ENCODE measurements at regions of chr2 and their contacts with region 1.

Region 1: GRCh38 chr2:66434679-66435548 is at the start of gene MEIS1:
- DNase-seq: peak; percentile 100
- ATAC-seq: peak; percentile 50
- H3K4me3 ChIP-seq: peak within 1 kb of the TSS; percentile 99
- H3K27ac ChIP-seq: peak within 1 kb of the TSS; percentile 99
- H3K4me1 ChIP-seq: peaks cover 5% of the 10 kb centered on the region; the same call in 1 of the 2 replicates
- H3K27me3 ChIP-seq: no peaks in the 10 kb centered on the region
- CTCF ChIP-seq: no peak
- POLR2A ChIP-seq: peak; percentile 99
- RAD21 ChIP-seq: peak; percentile 10
- total RNA-seq, gene MEIS1: 157 and 209 TPM in 2 replicates

Region 2: GRCh38 chr2:66839551-66840320 is 404.8 kb after region 1 on chr2:
- CTCF ChIA-PET with region 1: no interaction called
- POLR2A ChIA-PET with region 1: interaction called, 5 read pairs
- dilution Hi-C with region 1: no loop called
- in situ Hi-C with region 1: loop called (anchors 10 kb)
- intact Hi-C with region 1: no loop called
- DNase-seq: peak; percentile 100
- ATAC-seq: peak; percentile 93
- H3K4me3 ChIP-seq: 0 out of 2 replicates have a peak overlapping the region, but pooled peaks have one; percentile 37
- H3K27ac ChIP-seq: peak overlapping the region; percentile 89
- H3K4me1 ChIP-seq: peaks cover 11% of the 10 kb centered on the region
- H3K27me3 ChIP-seq: no peaks in the 10 kb centered on the region
- CTCF ChIP-seq: 0 out of 2 replicates have a peak, but pooled peaks have one; percentile 1
- POLR2A ChIP-seq: peak; percentile 73
- RAD21 ChIP-seq: no peak; the same call in 1 of the 2 replicates

Region 3: DNA sequence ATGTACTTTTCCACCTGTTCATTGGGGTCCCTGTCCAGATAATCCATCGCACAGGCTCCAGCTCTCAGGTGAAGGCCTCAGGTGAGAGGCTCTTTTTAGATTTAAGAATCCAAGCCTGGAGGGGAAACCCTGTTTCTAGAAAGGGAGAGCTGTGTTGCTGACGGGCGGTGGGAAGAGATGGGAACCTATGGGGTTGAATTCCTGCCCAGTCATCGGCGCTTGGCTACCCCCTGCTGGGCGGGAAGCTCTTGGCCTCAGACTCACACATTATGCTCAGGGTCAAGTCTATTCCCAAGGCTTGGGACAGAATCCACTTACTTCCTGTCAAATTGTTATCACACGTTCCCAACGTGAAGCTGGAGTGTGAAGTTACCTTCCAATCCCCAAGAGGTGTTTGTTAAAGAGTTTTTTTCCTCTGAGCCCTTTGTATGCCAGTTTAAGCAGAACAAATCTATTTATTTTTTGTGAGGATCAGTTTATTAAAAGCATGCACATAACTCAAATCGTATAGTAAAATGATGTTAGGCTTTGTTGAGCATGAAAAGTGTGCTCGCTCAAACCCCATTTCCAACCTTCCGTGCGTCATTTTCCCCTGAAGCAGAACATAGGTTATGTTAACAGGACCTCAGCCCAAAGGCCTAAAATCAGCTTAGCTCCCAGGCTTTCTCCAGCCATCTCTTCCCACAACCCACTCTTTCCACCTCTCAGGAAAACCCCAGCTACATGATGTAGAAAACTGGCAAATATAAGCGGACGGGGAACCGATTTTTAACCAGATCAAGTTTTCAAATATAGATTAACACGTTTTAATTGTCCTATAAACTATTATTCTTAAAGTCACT is 780.5 kb after region 1 on chr2:
- CTCF ChIA-PET with region 1: no interaction called
- POLR2A ChIA-PET with region 1: no interaction called
- dilution Hi-C with region 1: loop called (anchors 25 kb)
- in situ Hi-C with region 1: no loop called
- intact Hi-C with region 1: loop called (anchors 1 kb)
- DNase-seq: peak; percentile 92
- ATAC-seq: peak; percentile 95
- H3K4me3 ChIP-seq: no peak overlapping the region
- H3K27ac ChIP-seq: peak overlapping the region; percentile 86
- H3K4me1 ChIP-seq: peaks cover 16% of the 10 kb centered on the region
- H3K27me3 ChIP-seq: no peaks in the 10 kb centered on the region
- CTCF ChIP-seq: peak; percentile 88
- POLR2A ChIP-seq: no peak
- RAD21 ChIP-seq: peak; percentile 95

Region 4: DNA sequence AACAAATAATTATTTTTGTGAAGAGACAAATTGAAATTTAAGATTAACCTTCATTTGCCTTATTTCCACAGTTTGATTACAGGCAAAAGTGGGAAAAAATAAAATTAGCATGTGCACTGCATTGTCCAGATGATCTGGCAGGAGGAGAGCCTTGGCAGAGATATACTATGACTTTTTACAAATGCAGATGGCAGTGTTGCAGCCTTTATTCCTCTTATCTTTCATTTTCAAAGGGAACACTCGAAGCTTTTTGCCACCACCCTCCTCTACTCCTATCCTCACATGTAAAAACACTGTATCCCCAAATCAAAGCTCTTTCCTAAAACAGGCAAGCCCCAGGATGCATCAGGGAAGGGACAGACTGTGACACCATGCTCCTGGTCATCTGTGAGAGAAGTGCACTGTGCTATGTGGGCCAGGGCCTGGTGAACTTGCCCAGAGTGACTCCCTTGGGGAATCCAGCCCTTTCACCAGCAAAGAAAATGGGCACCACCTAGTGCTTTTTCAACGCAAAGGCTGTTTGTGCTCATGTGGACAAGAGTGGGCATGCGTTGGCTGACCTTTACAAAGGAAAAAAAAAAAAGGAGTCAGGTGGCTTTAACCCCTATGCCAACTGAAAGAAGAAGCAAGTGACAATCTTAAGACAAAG is 887.6 kb after region 1 on chr2:
- CTCF ChIA-PET with region 1: interaction called, 3 read pairs
- POLR2A ChIA-PET with region 1: no interaction called
- dilution Hi-C with region 1: no loop called
- in situ Hi-C with region 1: no loop called
- intact Hi-C with region 1: loop called (anchors 5 kb)
- DNase-seq: peak; percentile 76
- ATAC-seq: peak; percentile 87
- H3K4me3 ChIP-seq: no peak overlapping the region
- H3K27ac ChIP-seq: peak overlapping the region; percentile 47; the same call in 1 of the 2 replicates
- H3K4me1 ChIP-seq: peaks cover 5% of the 10 kb centered on the region
- H3K27me3 ChIP-seq: no peaks in the 10 kb centered on the region
- CTCF ChIP-seq: peak; percentile 57
- POLR2A ChIP-seq: no peak
- RAD21 ChIP-seq: peak; percentile 76

Region 5: DNA sequence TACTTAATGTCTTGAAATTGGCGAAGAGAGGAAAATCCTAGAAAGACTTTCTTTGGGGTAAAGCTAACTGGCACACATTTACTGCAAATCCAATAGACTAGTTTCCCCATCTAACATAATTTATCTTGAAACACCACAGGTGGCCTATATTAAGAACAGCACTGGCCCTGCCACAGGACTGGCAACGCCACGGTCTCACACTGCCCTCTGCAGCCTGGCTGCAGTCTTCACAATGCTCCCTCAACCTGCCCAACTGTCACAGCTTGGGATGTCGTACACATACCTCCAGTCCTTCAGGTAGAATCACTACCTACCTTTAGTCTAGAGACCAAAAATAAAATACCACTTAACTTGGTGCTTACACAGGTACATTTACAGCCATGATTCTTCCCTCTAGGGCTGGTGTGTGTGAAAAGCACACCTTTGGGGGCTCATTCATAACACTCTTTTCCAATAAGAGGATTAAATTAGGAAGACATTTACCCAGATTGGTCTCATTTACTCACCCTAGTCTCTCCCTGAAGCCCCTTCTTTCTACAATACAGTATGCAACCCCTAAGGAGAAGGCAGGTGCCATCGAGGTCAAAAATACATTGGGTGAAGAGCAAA is 1405.7 kb after region 1 on chr2:
- CTCF ChIA-PET with region 1: no interaction called
- POLR2A ChIA-PET with region 1: interaction called, 3 read pairs
- dilution Hi-C with region 1: no loop called
- in situ Hi-C with region 1: loop called (anchors 5 kb)
- intact Hi-C with region 1: loop called (anchors 2 kb)
- DNase-seq: peak; percentile 82
- ATAC-seq: peak; percentile 92
- H3K4me3 ChIP-seq: no peak overlapping the region
- H3K27ac ChIP-seq: no peak overlapping the region
- H3K4me1 ChIP-seq: peaks cover 4% of the 10 kb centered on the region; the same call in 1 of the 2 replicates
- H3K27me3 ChIP-seq: no peaks in the 10 kb centered on the region
- CTCF ChIP-seq: peak; percentile 95
- POLR2A ChIP-seq: 0 out of 2 replicates have a peak, but pooled peaks have one; percentile 36
- RAD21 ChIP-seq: peak; percentile 98

Region 6: DNA sequence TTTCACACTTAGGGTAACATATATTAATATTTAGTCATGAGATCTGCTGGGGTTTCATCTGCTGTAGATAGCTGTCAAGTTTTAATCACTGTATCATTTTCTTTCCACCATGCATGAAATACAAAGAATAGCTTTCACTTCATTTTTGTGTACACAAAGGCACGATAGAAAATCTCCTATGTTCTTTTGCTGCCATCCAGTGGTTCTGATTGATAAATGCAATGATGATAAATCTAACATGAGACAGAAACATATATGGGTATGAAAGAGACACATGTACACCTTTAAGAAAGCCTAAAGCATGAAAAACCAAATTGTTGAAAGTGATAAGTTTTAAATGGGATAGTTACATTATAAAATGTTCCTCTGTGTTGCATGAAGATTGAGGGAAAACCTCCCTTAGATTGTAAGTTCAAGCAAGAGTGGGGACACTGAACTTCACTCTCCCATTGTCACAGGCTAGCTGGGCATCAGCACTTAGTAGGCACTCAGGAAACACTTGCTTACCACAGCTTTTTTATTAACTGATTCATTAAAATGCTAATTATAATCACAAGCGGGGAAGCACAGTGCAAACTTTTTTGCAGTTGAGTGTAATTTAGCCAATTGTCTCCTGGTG is 1596.7 kb after region 1 on chr2:
- CTCF ChIA-PET with region 1: interaction called, 5 read pairs
- POLR2A ChIA-PET with region 1: no interaction called
- dilution Hi-C with region 1: no loop called
- in situ Hi-C with region 1: loop called (anchors 25 kb)
- intact Hi-C with region 1: no loop called
- DNase-seq: peak; percentile 70
- ATAC-seq: peak; percentile 89
- H3K4me3 ChIP-seq: no peak overlapping the region
- H3K27ac ChIP-seq: no peak overlapping the region
- H3K4me1 ChIP-seq: no peaks in the 10 kb centered on the region; the same call in 1 of the 2 replicates
- H3K27me3 ChIP-seq: no peaks in the 10 kb centered on the region
- CTCF ChIP-seq: peak; percentile 79
- POLR2A ChIP-seq: no peak
- RAD21 ChIP-seq: peak; percentile 89

Measured in IMR-90 (cell line).